ENCODE measurements at regions of chr5 and their contacts with region 1.

Region 1: DNA sequence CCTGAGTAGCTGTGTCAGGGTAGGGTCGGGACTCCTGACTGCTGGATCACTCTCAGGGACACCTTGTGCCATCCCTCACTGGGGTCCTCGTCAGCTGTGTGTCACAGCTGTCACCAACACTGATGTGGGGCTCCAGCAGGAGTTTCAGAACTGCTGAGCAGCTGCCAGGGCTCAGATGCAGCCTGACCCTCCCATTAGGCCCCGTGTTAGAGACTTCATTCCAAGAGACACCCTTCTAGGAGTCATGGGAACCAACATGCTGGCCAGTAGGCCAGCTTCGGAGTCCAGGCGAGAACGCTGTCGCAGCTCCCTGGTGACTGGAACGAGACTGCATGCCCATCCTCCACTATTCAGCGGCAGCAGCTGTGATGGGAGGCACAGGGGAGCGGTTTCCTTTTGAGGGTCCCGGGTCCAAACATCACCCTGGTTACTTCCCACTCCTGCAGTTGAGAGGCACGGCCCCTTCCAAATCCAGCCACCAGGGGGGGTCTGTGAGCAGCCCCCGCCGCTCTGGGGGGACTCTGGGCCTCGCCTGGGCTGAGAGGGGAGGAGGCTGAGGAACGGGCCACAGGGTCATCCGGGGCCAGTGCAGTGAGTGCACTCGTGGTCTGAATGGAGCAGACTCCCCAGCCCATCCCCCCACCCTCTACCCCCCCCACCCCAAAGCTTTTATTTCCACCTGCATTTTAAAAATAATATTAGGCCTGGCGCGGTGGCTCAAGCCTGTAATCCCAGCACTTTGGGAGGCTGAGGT is 12.6 kb upstream of the TCF7 start:
- DNase-seq: no peak
- H3K4me3 ChIP-seq: no peak overlapping the region
- CTCF ChIP-seq: peak; percentile 93

Region 2: DNA sequence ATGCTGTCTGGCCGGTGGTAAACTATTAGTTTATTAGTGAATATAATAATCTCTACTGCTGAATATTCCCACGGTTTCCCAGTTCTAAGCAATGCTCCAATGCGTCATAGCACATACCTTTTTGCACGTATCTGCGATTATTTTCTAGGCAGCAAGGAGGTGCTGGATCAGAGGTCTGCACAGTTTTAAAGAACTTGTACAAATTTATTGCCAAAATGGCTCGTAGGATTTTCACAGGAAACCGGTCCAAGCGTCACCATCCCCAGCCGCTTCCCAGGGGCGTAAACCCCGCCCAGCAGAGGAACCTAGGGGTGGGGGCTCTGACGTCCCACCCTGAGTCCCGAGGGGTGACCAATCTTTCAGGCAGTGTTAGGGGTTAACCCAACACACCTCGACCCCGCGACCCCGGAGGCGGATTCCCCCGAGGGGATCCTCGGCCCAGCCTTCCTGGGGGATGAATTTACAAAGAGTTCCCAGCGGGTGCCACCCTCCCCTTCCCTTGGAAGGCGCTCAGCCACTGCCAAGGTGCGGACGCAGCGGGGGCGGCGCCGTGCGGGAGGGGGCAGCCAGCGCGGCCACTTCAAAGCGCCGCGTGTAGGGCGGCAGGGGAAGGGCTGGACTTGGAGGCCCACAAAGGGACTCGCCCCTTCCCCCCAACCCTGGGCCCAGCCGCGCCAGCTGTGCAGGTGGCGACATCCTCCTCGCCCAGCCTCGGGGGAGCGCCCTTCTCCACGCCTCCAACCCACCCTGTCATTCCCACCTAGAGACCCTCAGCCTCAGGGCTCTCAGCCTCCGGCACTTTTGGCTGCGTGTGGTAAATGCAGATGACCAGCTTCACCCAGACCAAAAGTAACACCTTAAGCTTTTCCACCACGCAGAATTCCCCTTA is 30.9 kb before region 1 on chr5:
- CTCF ChIA-PET with region 1: interaction called, 16 read pairs
- POLR2A ChIA-PET with region 1: no interaction called
- DNase-seq: no peak
- H3K4me3 ChIP-seq: peak overlapping the region; percentile 29
- CTCF ChIP-seq: no peak

Region 3: DNA sequence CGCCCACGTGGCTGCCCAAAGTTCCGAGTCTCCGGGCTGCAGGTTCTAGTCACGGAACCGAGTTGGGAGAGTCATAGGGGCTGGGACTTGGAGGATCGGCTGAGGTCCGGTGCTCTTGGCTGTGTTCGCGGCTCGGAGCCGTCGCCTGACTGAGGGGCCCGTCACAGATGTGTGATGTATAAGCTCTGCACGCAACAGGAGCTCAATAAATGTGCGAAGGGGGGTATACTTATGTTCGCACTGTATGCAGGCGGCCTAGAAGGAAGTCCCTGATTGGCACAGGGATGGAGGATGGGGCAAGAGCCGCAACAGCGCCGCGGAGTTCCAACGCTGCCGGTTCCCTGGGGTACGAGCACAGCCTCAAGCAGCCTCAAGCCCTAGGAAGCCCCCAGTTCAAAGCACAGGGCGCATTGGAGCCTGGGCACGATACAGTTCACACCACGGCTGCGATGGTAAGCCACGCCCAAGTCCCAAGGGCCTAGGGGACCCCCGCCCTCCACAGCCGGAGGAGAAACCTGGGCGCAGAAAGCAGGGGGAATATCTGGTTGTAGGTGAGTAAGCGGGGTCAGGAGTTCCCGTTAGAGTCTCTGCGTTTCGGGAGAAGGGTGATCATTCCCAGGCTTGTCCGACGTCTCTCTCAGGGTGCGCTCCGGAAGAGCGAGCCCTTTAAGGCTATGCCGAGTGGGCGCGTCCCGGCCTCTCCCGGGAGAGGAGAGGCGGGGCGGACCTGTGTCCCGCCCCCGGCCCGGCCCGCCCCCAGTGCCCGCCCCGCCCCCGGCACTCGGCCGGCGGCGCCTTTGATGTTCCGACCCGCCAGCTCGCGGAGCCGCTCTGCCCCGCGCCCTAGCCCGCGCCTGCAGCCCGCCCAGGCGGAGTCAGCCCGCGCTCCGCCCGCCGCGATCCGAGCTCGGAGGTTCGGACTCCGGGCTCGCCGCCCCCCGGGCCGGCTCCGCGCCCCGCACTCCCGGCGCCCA is 12.3 kb after region 1 on chr5 and contains the start of gene TCF7:
- CTCF ChIA-PET with region 1: interaction called, 89 read pairs
- POLR2A ChIA-PET with region 1: no interaction called
- DNase-seq: no peak
- H3K4me3 ChIP-seq: peak within 1 kb of the TSS; percentile 62
- CTCF ChIP-seq: no peak

Region 4: GRCh38 chr5:134125039-134126015 is 23.5 kb after region 1 on chr5:
- CTCF ChIA-PET with region 1: interaction called, 33 read pairs
- POLR2A ChIA-PET with region 1: no interaction called
- DNase-seq: peak; percentile 71
- H3K4me3 ChIP-seq: no peak overlapping the region
- CTCF ChIP-seq: no peak